Lower lobe of right lung (tissue), 2 donors: ENCODE measurements at regions of chr4 and their contacts with region 1.

Region 1: DNA sequence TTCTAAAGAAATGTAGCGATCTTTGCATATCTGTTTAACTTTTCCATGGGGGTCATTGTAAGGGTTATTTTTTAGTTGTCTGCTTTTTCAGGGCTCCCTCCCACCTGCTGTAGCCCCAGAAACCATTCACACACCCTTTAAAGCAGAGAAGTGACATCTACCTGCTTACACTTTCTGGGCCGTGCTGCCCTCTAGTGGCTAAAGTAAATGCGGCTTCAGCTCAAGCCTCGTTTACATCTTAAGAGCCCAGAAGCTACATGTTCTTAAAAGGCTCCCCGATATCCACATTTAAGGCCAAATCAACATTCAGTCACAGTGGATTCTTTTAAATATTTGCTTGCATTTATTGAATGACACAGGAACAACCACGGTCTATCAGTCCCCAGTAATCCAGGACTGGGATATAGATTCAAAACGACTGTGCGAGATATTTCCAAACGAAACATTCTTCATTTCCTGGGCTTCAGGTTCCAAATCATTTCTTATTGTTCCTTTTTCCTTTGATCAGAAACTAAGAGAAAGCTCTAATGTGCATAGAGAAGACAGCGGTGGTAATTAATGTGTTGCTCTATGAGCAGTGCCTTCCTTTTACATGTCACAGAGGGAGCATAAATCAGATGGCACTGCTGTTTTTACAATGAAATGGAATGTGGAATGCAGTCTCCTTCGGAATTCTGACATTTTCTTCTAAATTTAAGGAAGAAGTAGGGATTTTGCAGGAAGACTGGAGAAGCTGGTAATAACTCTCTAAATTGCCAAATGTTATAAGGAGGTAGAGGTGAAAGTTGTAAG is 119.9 kb downstream of the RASGEF1B start:
- DNase-seq: peak; percentile 70
- ATAC-seq: peak; percentile 78 to 88
- H3K4me3 ChIP-seq: no peak overlapping the region
- H3K27ac ChIP-seq: no peak overlapping the region
- H3K4me1 ChIP-seq: no peaks in the 10 kb centered on the region
- H3K27me3 ChIP-seq: no peaks in the 10 kb centered on the region
- CTCF ChIP-seq: peak; percentile 87

Region 2: DNA sequence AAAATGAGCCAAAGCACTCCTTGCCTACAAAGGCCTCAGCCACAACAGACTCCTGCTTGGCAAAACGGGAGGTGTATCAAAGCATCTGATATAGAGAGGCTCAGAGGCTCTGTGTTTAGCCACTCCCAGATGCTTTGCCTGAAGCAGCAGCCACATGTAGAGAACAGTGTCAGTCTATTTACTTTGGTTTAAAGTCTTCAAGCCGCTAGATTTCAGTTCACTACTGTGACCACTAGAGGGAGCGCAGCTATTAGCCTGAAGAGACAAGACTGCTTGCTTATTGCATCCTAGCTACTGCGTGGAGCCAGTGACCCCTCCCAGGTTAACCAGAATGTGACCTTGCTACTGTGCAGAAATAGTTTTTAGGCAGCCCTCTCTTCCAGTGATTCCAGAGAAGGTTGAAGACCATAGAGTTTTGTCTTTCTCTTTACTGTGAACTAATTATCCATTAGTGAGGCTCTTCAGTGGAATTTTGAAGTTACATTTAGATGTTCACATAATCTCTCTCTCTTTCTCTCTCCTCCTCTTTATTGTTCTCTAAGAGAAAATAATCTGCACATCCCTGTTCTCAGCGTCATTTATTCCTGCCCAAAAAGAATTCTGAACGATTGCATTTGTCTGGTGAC is 282.0 kb before region 1 on chr4:
- intact Hi-C with region 1: loop called (anchors 5 kb)
- DNase-seq: no peak
- ATAC-seq: peak; percentile 89 to 93
- H3K4me3 ChIP-seq: no peak overlapping the region
- H3K27ac ChIP-seq: no peak overlapping the region
- H3K4me1 ChIP-seq: no peaks in the 10 kb centered on the region
- H3K27me3 ChIP-seq: no peaks in the 10 kb centered on the region
- CTCF ChIP-seq: peak; percentile 89

Region 3: DNA sequence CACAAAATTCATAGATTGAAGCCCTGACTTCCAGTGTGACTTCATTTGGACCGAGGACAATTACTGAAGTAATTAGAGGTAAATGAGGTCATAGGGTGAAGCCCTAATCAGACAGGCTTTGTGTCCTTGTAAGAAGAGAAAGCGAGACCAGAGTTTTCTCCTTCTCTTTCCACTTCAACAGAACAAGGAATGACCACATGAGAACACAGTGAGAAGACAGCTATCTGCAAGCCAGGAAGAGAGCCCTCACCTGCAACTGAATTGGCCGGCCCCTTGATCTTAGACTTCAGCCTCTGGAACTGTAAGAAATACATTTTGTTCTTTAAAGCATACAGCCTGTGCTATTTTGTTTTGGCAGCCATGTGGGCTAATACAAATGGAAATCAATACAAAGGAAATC is 69.7 kb before region 1 on chr4:
- intact Hi-C with region 1: no loop called
- DNase-seq: no peak
- ATAC-seq: no peak
- H3K4me3 ChIP-seq: no peak overlapping the region
- H3K27ac ChIP-seq: no peak overlapping the region
- H3K4me1 ChIP-seq: no peaks in the 10 kb centered on the region
- H3K27me3 ChIP-seq: no peaks in the 10 kb centered on the region
- CTCF ChIP-seq: no peak